ENCODE measurements at regions of chr4 and their contacts with region 1.

Region 1: DNA sequence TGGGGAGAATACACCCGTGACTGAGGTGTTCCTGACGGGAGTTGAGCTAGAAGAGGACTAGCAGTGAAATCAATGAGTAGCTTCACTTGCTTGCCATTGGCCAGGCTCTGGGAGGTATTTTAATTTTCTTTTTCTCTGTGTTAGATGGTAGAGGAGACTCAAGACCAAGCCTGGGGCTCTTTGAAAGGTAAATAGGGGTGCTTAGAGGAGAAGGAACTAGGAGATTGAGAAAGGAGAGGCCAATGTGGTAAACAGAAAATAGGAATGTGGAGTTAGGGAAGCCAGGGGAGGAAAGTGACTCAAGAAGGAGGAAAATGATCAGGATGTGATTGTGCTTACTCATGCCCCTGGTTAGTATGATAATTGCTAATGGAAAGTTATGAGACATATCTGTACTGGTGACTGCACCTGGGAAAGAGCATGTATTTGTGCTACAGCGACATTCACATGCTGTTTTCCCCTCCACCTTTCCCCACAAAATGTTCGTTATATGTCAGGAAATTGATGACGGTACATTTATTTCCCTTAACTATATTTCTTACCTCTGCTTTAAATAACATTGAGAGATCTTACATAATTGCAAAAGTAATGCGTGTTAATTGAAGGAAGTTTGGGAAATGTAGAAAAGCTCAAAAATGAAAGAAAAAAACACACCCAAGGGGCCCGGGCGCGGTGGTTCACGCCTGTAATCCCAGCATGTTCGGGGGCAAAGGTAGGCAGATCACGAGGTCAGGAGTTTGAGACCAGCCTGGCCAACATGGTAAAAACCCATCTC is 16.9 kb upstream of the LRBA start:
- DNase-seq: no peak
- H3K4me3 Mint-ChIP-seq: peak overlapping the region; percentile 76
- H3K27ac Mint-ChIP-seq: peak overlapping the region; percentile 93
- H3K4me1 Mint-ChIP-seq: peaks cover 27% of the 10 kb centered on the region
- H3K27me3 Mint-ChIP-seq: no peaks in the 10 kb centered on the region

Region 2: DNA sequence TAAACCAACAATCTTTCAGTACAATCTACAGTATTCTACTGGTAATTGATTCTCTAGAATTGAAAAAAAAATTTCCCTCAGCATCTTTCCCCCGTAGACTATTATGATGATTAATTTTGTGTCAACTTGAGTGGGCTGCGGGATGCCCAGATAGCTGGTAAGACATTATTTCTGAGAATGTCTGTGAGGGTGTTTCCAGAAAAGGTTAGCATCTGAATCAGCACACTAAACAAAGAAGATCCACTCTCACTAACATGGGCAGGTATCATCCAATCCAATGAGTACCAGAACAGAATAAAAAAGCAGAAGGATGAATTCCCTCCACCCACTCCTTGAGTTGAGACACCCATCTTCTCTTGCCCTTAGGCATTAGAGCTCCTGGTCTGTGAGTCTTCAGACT is 636.1 kb before region 1 on chr4:
- intact Hi-C with region 1: loop called (anchors 5 kb)
- DNase-seq: no peak
- H3K4me3 Mint-ChIP-seq: no peak overlapping the region
- H3K27ac Mint-ChIP-seq: peak overlapping the region; percentile 43
- H3K4me1 Mint-ChIP-seq: peaks cover 14% of the 10 kb centered on the region
- H3K27me3 Mint-ChIP-seq: no peaks in the 10 kb centered on the region

Region 3: GRCh38 chr4:150818661-150819060 is 213.4 kb before region 1 on chr4:
- intact Hi-C with region 1: no loop called
- DNase-seq: no peak
- H3K4me3 Mint-ChIP-seq: no peak overlapping the region
- H3K27ac Mint-ChIP-seq: no peak overlapping the region
- H3K4me1 Mint-ChIP-seq: peaks cover 8% of the 10 kb centered on the region
- H3K27me3 Mint-ChIP-seq: no peaks in the 10 kb centered on the region

Region 4: GRCh38 chr4:150970685-150971151 is 61.3 kb before region 1 on chr4:
- intact Hi-C with region 1: loop called (anchors 2 kb)
- DNase-seq: peak; percentile 49
- H3K4me3 Mint-ChIP-seq: no peak overlapping the region
- H3K27ac Mint-ChIP-seq: peak overlapping the region; percentile 71
- H3K4me1 Mint-ChIP-seq: peaks cover 27% of the 10 kb centered on the region
- H3K27me3 Mint-ChIP-seq: no peaks in the 10 kb centered on the region

Region 5: DNA sequence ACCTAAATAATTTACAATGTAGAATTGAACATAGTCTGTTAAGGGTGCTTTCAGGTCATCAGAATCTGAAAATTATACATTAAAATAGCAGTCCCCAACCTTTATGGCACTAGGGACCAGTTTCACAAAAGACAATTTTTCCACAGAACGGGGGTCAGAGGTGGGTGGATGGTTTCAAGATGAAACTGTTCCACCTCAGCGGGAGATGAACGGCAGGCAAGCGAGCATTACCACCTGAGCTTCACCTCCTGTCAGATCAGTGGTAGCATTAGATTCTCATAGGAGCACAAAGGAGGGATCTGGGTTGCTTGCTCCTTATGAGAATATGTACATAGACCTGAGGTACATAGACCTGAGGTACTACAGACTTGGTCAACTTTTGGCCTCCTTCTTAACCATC is 45.9 kb before region 1 on chr4:
- intact Hi-C with region 1: loop called (anchors 1 kb)
- DNase-seq: peak; percentile 54
- H3K4me3 Mint-ChIP-seq: no peak overlapping the region
- H3K27ac Mint-ChIP-seq: peak overlapping the region; percentile 68
- H3K4me1 Mint-ChIP-seq: peaks cover 20% of the 10 kb centered on the region
- H3K27me3 Mint-ChIP-seq: no peaks in the 10 kb centered on the region

Region 6: DNA sequence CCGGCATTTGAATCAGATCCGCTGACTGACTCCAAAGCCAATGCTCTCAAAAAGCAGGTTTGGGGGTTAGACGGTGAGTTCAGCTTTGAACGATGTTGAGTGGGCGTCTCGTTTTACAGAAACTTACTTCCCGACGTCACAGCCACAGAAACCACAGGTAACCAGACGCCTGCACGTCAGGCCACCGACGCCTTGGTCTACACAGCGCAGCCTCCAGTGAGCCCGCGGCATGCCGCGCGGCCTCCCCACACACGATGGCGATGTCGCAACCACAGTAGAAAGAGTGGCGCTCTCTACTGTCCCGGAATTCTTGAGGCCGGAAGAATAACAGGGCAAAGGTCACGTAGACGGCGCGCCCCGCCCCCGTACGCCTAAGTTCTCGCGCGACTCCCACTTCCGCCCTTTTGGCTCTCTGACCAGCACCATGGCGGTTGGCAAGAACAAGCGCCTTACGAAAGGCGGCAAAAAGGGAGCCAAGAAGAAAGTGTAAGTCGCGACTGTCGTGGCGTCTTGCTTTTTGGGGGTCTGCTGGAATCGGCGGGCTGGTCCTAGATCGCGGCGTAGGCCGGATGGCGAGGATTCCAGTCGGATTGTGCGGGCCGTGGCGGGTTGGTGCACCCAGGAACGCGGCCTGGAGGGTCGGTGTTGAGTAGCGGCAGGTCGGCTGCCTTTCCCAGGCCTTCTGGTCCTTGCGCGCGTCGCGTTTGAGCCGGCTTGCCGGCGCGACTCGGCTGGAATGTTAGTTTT is 67.4 kb after region 1 on chr4 and contains the start of gene RPS3A:
- intact Hi-C with region 1: loop called (anchors 1 kb)
- DNase-seq: peak; percentile 100
- H3K4me3 Mint-ChIP-seq: peak within 1 kb of the TSS; percentile 98
- H3K27ac Mint-ChIP-seq: peak within 1 kb of the TSS; percentile 98
- H3K4me1 Mint-ChIP-seq: peaks cover 48% of the 10 kb centered on the region
- H3K27me3 Mint-ChIP-seq: peaks cover 4% of the 10 kb centered on the region
- total RNA-seq, gene RPS3A: 1,850 and 1,855 TPM in 2 replicates

Region 7: DNA sequence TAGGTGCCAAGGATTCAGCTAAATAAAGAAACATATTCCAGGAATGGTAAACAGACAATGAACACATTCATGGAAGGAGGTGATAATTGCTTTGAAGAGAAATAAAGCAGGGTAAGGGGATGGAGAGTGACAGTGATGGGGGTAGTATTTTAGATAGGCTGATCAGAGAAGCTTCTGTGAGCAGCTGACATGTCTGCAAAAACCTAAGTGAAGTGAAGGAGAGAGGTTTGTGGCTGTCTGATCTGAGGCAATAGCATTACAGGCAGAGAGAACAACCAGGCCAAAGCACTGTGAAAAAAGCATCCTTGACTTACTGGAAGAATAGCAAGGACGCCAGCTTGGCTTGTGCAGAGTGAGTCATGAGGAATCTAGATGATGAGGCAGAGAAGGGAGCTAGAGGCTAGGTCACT is 1000.7 kb after region 1 on chr4:
- intact Hi-C with region 1: no loop called
- DNase-seq: no peak
- H3K4me3 Mint-ChIP-seq: no peak overlapping the region
- H3K27ac Mint-ChIP-seq: no peak overlapping the region
- H3K4me1 Mint-ChIP-seq: peaks cover 4% of the 10 kb centered on the region
- H3K27me3 Mint-ChIP-seq: peaks cover 2% of the 10 kb centered on the region